Endothelial cell of umbilical vein (primary cell): ENCODE measurements at regions of chr17 and their contacts with region 1.

Region 1: GRCh38 chr17:6701719-6702118 is 11.4 kb downstream of the SLC13A5 start:
- DNase-seq: peak; percentile 10
- H3K4me3 ChIP-seq: no peak overlapping the region
- H3K27ac ChIP-seq: no peak overlapping the region
- H3K4me1 ChIP-seq: no peaks in the 10 kb centered on the region
- H3K27me3 ChIP-seq: no peaks in the 10 kb centered on the region
- CTCF ChIP-seq: peak; percentile 26 to 57
- POLR2A ChIP-seq: no peak

Region 2: GRCh38 chr17:6654841-6655731 is 46.6 kb before region 1 on chr17:
- CTCF ChIA-PET with region 1: no interaction called
- POLR2A ChIA-PET with region 1: no interaction called
- dilution Hi-C with region 1: no loop called
- intact Hi-C with region 1: no loop called
- DNase-seq: no peak
- H3K4me3 ChIP-seq: no peak overlapping the region
- H3K27ac ChIP-seq: no peak overlapping the region
- H3K4me1 ChIP-seq: peaks cover 8% of the 10 kb centered on the region
- H3K27me3 ChIP-seq: peaks cover 39 to 50% of the 10 kb centered on the region in 2 experiments
- CTCF ChIP-seq: no peak
- POLR2A ChIP-seq: no peak

Region 3: DNA sequence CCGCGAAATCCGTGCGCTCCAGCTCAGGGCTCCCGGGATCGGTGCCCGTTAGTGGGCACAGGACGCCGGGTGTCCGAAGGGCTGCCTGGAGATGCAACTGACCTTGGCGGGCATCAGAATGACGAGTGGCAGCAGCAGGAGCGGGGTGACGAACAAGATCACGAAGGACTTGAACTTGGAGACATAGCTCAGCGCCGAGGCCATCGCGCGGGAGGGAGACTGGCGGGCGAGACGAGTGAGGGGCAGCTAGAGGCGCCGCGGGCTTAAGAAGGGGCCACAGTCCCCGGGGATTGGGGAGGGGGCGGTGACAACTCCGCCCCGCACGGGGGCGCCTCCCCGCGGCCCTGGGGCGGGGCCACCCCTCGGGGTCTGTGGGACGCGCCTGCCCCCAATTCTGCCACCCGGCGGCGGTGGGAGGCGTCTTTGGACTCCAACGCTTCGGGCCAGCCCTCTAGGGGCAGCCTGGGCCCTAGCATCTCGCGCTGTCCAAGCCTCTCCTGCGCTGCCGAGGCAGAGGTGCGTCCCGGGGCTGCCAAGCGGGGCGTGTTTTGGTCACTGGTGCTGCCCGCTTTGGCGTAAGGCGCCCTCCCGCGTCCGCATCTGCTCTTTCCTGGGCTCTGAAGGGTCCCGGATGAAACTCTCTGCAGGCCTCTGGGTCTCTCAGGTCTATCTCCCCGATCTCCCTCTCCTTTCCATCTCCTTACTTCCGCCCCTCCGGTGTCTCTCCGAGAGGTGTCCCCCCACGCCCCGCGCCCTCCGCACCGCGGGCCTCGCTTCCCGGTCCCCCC is 11.6 kb after region 1 on chr17 and contains the start of gene SLC13A5:
- CTCF ChIA-PET with region 1: interaction called, 12 read pairs
- POLR2A ChIA-PET with region 1: no interaction called
- dilution Hi-C with region 1: no loop called
- intact Hi-C with region 1: no loop called
- DNase-seq: peak; percentile 8
- H3K4me3 ChIP-seq: no peak within 1 kb of the TSS
- H3K27ac ChIP-seq: no peak within 1 kb of the TSS
- H3K4me1 ChIP-seq: no peaks in the 10 kb centered on the region
- H3K27me3 ChIP-seq: peaks cover 28 to 32% of the 10 kb centered on the region in 2 experiments
- CTCF ChIP-seq: peak; percentile 12 to 53
- POLR2A ChIP-seq: no peak
- total RNA-seq, gene SLC13A5: not detected in 2 replicates

Region 4: DNA sequence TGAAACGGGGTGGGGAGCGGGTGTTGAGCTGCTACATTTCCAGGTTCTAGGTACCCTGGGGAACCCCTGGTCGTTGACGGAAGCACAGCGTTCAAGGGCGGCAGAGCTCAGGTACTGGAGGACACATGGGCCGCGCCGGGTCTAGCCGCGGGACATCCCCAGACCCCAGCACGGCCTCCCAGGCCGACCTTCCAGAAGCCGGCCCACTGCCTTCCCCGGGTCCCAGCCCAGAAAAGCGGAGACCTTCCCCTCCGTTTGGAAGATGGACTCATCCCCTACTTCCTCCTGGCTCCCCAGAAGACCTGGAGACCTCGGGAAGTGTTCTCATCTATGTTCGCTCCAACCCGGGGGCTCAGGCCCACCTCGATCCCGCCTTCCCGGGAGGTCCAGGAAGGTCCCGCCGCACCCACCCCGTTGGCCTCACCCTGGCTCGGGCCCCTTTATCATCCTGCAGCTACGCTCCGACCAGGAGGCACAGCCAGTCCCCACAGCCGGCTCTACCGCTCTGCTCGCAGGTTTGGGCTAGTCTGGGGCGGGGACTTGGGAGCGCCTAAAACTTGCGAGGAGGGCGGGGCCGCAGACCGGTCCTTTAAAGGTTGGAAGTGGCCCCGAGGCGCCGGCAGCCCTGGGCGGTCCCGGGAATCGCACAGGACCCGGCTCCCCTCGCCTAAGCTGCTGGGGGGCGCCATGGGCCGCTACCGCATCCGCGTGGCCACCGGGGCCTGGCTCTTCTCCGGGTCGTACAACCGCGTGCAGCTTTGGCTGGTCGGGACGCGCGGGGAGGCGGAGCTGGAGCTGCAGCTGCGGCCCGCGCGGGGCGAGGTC is 293.9 kb after region 1 on chr17 and contains the start of gene ALOX12:
- CTCF ChIA-PET with region 1: no interaction called
- POLR2A ChIA-PET with region 1: no interaction called
- dilution Hi-C with region 1: no loop called
- intact Hi-C with region 1: no loop called
- DNase-seq: no peak
- H3K4me3 ChIP-seq: no peak within 1 kb of the TSS
- H3K27ac ChIP-seq: no peak within 1 kb of the TSS
- H3K4me1 ChIP-seq: no peaks in the 10 kb centered on the region
- H3K27me3 ChIP-seq: no peaks in the 10 kb centered on the region
- CTCF ChIP-seq: no peak
- POLR2A ChIP-seq: no peak
- total RNA-seq, gene ALOX12: not detected in 2 replicates

Region 5: GRCh38 chr17:7094652-7095019 is 392.9 kb after region 1 on chr17:
- CTCF ChIA-PET with region 1: no interaction called
- POLR2A ChIA-PET with region 1: no interaction called
- dilution Hi-C with region 1: no loop called
- intact Hi-C with region 1: no loop called
- DNase-seq: no peak
- H3K4me3 ChIP-seq: no peak overlapping the region
- H3K27ac ChIP-seq: no peak overlapping the region
- H3K4me1 ChIP-seq: peaks cover 11% of the 10 kb centered on the region
- H3K27me3 ChIP-seq: no peaks in the 10 kb centered on the region
- CTCF ChIP-seq: no peak
- POLR2A ChIP-seq: no peak

Region 6: GRCh38 chr17:7147772-7148171 is 446.1 kb after region 1 on chr17:
- CTCF ChIA-PET with region 1: no interaction called
- POLR2A ChIA-PET with region 1: no interaction called
- dilution Hi-C with region 1: no loop called
- intact Hi-C with region 1: no loop called
- DNase-seq: no peak
- H3K4me3 ChIP-seq: no peak overlapping the region
- H3K27ac ChIP-seq: no peak overlapping the region
- H3K4me1 ChIP-seq: peaks cover 4% of the 10 kb centered on the region
- H3K27me3 ChIP-seq: peaks cover 0 to 7% of the 10 kb centered on the region in 2 experiments
- CTCF ChIP-seq: no peak
- POLR2A ChIP-seq: no peak